ENCODE measurements at regions of chr5 and their contacts with region 1.

Region 1: GRCh38 chr5:119411935-119412602 is 40.2 kb upstream of the HSD17B4 start:
- DNase-seq: peak; percentile 93
- H3K4me3 Mint-ChIP-seq: peak overlapping the region; percentile 72
- H3K27ac Mint-ChIP-seq: peak overlapping the region; percentile 77
- H3K4me1 Mint-ChIP-seq: peaks cover 14% of the 10 kb centered on the region
- H3K27me3 Mint-ChIP-seq: no peaks in the 10 kb centered on the region
- CTCF ChIP-seq: peak; percentile 96

Region 2: DNA sequence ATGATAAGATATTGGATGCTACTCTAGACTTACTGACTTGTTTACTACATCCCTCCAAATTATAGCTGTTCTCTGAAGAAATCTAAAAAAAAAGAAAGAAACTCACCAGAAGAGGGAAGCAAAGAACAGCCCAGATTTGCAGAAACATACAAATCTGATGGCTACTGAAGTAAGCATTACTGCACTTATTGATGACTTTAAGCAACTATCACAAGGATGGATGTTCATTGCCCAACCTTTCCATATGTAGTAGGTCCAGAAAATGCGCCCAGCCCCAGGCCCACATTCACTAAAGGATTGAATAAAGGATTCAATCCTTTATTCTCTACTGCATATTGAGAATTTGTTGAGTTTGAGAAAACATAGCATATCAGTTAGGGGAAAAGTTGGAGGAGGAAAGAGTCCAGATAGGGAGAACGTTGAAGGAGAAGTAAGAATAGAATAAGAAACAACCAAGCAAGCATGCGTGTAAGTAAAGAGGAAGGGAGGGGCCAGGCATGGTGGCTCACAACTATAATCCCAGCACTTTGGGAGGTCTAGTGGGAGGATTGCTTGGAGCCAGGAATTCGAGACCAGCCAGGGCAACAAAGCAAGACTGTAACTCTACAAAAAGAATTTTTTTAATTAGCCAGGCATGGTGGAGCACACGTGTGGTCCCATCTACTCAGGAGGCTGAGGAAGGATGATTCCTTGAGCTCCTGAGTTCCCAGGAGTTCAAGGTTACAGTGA is 389.9 kb before region 1 on chr5:
- CTCF ChIA-PET with region 1: interaction called, 64 read pairs
- POLR2A ChIA-PET with region 1: interaction called, 3 read pairs
- intact Hi-C with region 1: loop called (anchors 1 kb)
- DNase-seq: peak; percentile 57
- H3K4me3 Mint-ChIP-seq: no peak overlapping the region
- H3K27ac Mint-ChIP-seq: no peak overlapping the region
- H3K4me1 Mint-ChIP-seq: peaks cover 6% of the 10 kb centered on the region
- H3K27me3 Mint-ChIP-seq: no peaks in the 10 kb centered on the region
- CTCF ChIP-seq: peak; percentile 61

Region 3: DNA sequence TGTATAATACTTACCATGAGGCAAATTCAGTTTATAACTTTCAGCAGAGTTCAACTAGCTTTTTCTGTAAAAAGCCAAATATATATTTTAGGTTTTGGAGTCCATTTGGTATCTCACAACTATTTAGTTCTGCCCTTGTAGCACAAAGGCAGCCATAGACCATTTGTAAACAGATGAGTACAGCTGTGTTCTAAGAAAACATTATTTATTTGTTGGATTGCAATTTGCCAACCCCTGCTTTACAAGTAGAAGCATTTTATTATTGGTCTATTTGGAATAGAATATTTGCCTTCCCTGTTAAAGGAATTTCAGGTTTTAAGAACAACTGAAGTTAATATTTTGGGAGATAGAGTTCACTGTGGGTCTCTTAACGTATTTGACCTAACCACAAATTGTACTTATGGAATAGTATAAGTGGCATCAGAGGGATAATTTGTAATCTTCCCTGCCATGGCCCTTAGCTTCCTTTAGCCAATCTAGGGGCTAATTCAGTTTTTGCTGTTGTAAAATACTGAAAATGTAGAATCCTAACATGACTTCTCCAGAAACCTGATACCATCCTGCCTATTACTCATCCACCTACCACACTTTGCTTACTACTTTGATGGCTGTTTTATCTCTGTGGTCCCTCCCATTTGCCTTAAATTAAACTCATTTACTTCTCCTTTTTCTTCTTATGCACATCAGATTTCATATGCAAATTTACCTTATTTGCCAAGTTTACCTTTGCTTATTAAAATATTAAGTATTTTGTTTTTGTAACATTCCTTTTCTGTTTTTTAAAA is 232.0 kb before region 1 on chr5:
- CTCF ChIA-PET with region 1: interaction called, 17 read pairs
- POLR2A ChIA-PET with region 1: interaction called, 3 read pairs
- intact Hi-C with region 1: loop called (anchors 1 kb)
- DNase-seq: peak; percentile 4
- H3K4me3 Mint-ChIP-seq: no peak overlapping the region
- H3K27ac Mint-ChIP-seq: no peak overlapping the region
- H3K4me1 Mint-ChIP-seq: peaks cover 5% of the 10 kb centered on the region
- H3K27me3 Mint-ChIP-seq: no peaks in the 10 kb centered on the region
- CTCF ChIP-seq: no peak

Region 4: DNA sequence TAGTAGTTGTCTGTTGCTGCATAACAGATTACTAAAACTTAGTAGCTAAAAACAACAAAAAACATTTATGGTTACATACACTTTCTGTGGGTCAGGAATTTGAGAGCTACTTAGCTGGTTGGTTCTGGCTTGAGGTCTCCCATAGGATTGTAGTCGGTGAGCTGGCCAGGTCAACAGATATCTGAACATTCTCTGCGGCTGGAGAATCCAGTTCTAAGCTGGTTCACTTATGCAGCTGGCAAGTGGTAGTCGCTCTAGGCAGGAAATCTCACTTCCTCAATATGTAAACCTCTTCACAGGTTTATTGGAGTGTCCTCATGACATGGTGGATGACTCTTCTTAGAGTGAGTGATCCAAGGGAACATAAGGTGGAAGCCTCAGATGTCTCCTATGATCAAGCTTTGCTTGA is 121.9 kb before region 1 on chr5:
- CTCF ChIA-PET with region 1: interaction called, 13 read pairs
- POLR2A ChIA-PET with region 1: interaction called, 9 read pairs
- intact Hi-C with region 1: no loop called
- DNase-seq: no peak
- H3K4me3 Mint-ChIP-seq: no peak overlapping the region
- H3K27ac Mint-ChIP-seq: no peak overlapping the region
- H3K4me1 Mint-ChIP-seq: peaks cover 42% of the 10 kb centered on the region
- H3K27me3 Mint-ChIP-seq: no peaks in the 10 kb centered on the region
- CTCF ChIP-seq: no peak

Region 5: GRCh38 chr5:119322948-119323537 is 89.0 kb before region 1 on chr5:
- CTCF ChIA-PET with region 1: interaction called, 253 read pairs
- POLR2A ChIA-PET with region 1: interaction called, 29 read pairs
- intact Hi-C with region 1: no loop called
- DNase-seq: peak; percentile 54
- H3K4me3 Mint-ChIP-seq: no peak overlapping the region
- H3K27ac Mint-ChIP-seq: peak overlapping the region; percentile 98
- H3K4me1 Mint-ChIP-seq: peaks cover 44% of the 10 kb centered on the region
- H3K27me3 Mint-ChIP-seq: no peaks in the 10 kb centered on the region
- CTCF ChIP-seq: no peak

Region 6: GRCh38 chr5:119355685-119356611 is 56.1 kb before region 1 on chr5 and contains the start of gene TNFAIP8:
- CTCF ChIA-PET with region 1: interaction called, 132 read pairs
- POLR2A ChIA-PET with region 1: interaction called, 174 read pairs
- intact Hi-C with region 1: loop called (anchors 1 kb)
- DNase-seq: peak; percentile 73
- H3K4me3 Mint-ChIP-seq: peak within 1 kb of the TSS; percentile 95
- H3K27ac Mint-ChIP-seq: peak within 1 kb of the TSS; percentile 79
- H3K4me1 Mint-ChIP-seq: peaks cover 44% of the 10 kb centered on the region
- H3K27me3 Mint-ChIP-seq: no peaks in the 10 kb centered on the region
- CTCF ChIP-seq: no peak
- total RNA-seq, gene TNFAIP8: 13.0 and 16.2 TPM in 2 replicates

Region 7: GRCh38 chr5:119452373-119453039 is 40.4 kb after region 1 on chr5 and contains the start of gene HSD17B4:
- CTCF ChIA-PET with region 1: interaction called, 7 read pairs
- POLR2A ChIA-PET with region 1: interaction called, 20 read pairs
- intact Hi-C with region 1: no loop called
- DNase-seq: peak; percentile 95
- H3K4me3 Mint-ChIP-seq: peak within 1 kb of the TSS; percentile 87
- H3K27ac Mint-ChIP-seq: peak within 1 kb of the TSS; percentile 82
- H3K4me1 Mint-ChIP-seq: peaks cover 13% of the 10 kb centered on the region
- H3K27me3 Mint-ChIP-seq: no peaks in the 10 kb centered on the region
- CTCF ChIP-seq: no peak
- total RNA-seq, gene HSD17B4: 163 and 169 TPM in 2 replicates

Region 8: GRCh38 chr5:119478781-119479180 is 66.7 kb after region 1 on chr5:
- CTCF ChIA-PET with region 1: no interaction called
- POLR2A ChIA-PET with region 1: no interaction called
- intact Hi-C with region 1: no loop called
- DNase-seq: peak; percentile 54
- H3K4me3 Mint-ChIP-seq: no peak overlapping the region
- H3K27ac Mint-ChIP-seq: no peak overlapping the region
- H3K4me1 Mint-ChIP-seq: peaks cover 6% of the 10 kb centered on the region
- H3K27me3 Mint-ChIP-seq: no peaks in the 10 kb centered on the region
- CTCF ChIP-seq: no peak

Region 9: GRCh38 chr5:119706049-119706448 is 294.0 kb after region 1 on chr5:
- CTCF ChIA-PET with region 1: no interaction called
- POLR2A ChIA-PET with region 1: no interaction called
- intact Hi-C with region 1: no loop called
- DNase-seq: no peak
- H3K4me3 Mint-ChIP-seq: no peak overlapping the region
- H3K27ac Mint-ChIP-seq: no peak overlapping the region
- H3K4me1 Mint-ChIP-seq: no peaks in the 10 kb centered on the region
- H3K27me3 Mint-ChIP-seq: no peaks in the 10 kb centered on the region
- CTCF ChIP-seq: no peak

Region 10: DNA sequence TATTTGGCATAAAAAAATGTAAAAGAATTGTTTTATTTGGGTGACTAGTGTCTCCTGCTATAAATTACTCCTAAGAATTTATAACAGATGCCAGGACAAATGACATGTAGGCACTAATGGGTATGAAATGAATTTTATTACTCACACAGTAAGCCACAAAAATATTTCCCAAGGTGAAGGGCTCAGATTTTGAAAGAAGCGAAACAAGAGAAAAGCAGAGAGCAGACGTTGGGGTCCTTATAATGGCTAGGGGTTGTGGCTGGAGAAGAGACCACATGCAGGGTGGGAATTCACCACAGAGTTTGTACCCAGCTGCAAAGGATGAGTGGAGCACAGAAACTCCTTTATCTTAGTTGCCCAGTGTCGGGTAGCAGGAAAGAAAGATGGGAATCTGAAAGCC is 1007.1 kb after region 1 on chr5:
- CTCF ChIA-PET with region 1: no interaction called
- POLR2A ChIA-PET with region 1: no interaction called
- intact Hi-C with region 1: no loop called
- DNase-seq: no peak
- H3K4me3 Mint-ChIP-seq: no peak overlapping the region
- H3K27ac Mint-ChIP-seq: no peak overlapping the region
- H3K4me1 Mint-ChIP-seq: peaks cover 6% of the 10 kb centered on the region
- H3K27me3 Mint-ChIP-seq: no peaks in the 10 kb centered on the region
- CTCF ChIP-seq: no peak